ENCODE measurements at regions of chr18 and their contacts with region 1.

Region 1: DNA sequence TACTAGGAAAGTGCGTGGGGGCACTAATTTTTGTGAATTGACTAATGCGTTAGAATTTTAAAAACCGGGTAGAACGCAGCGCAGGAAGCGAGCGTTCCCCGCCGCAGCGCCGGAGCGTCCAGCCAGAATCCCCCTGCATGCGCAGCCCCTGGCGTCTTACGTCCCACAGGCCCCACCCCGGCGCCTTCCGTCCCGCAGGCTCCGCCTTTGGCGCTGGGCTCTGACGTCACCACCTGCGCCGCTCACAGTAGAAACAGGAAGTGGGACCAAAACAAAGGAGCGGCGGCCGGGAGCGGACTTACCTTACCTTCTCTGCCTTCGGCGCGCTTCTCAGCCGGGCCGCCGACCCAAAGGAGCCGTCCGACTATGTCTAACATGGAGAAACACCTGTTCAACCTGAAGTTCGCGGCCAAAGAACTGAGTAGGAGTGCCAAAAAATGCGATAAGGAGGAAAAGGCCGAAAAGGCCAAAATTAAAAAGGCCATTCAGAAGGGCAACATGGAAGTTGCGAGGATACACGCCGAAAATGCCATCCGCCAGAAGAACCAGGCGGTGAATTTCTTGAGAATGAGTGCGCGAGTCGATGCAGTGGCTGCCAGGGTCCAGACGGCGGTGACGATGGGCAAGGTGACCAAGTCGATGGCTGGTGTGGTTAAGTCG is at the start of gene CHMP1B:
- DNase-seq: peak; percentile 98
- H3K4me3 ChIP-seq: peak within 1 kb of the TSS; percentile 42 to 94 (median 86)
- H3K27ac ChIP-seq: peak within 1 kb of the TSS; percentile 89
- H3K4me1 ChIP-seq: peaks cover 21% of the 10 kb centered on the region
- H3K27me3 ChIP-seq: peaks cover 2 to 5% of the 10 kb centered on the region in 2 experiments
- CTCF ChIP-seq: no peak
- POLR2A ChIP-seq: peak; percentile 95
- total RNA-seq, gene CHMP1B: 27.0 and 27.2 TPM in 2 replicates

Region 2: DNA sequence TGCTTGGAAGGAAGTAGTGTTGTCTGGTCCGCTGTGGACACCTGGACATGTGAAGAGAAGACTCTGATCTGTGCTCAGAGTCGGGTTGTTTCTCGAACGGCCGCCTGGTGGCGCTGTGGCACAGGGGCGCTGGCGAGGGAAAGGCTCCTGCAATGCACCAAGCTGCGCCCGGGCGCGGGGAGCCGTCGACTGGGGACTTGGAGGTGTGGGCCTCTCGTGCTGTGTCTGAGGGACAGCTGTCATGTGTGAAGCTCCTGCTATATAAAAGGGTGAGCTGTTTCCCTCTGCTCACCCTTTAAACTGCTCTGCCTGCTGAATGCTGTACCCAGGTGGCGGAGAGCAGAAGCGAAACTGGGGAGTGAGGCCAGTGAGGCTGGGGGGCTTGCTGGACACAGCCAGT is 118.2 kb before region 1 on chr18:
- CTCF ChIA-PET with region 1: interaction called, 8 read pairs
- POLR2A ChIA-PET with region 1: no interaction called
- dilution Hi-C with region 1: no loop called
- intact Hi-C with region 1: loop called (anchors 10 kb)
- DNase-seq: peak; percentile 60
- H3K4me3 ChIP-seq: no peak overlapping the region
- H3K27ac ChIP-seq: no peak overlapping the region
- H3K4me1 ChIP-seq: no peaks in the 10 kb centered on the region
- H3K27me3 ChIP-seq: peaks cover 0 to 2% of the 10 kb centered on the region in 2 experiments
- CTCF ChIP-seq: peak; percentile 86 to 96
- POLR2A ChIP-seq: no peak

Region 3: DNA sequence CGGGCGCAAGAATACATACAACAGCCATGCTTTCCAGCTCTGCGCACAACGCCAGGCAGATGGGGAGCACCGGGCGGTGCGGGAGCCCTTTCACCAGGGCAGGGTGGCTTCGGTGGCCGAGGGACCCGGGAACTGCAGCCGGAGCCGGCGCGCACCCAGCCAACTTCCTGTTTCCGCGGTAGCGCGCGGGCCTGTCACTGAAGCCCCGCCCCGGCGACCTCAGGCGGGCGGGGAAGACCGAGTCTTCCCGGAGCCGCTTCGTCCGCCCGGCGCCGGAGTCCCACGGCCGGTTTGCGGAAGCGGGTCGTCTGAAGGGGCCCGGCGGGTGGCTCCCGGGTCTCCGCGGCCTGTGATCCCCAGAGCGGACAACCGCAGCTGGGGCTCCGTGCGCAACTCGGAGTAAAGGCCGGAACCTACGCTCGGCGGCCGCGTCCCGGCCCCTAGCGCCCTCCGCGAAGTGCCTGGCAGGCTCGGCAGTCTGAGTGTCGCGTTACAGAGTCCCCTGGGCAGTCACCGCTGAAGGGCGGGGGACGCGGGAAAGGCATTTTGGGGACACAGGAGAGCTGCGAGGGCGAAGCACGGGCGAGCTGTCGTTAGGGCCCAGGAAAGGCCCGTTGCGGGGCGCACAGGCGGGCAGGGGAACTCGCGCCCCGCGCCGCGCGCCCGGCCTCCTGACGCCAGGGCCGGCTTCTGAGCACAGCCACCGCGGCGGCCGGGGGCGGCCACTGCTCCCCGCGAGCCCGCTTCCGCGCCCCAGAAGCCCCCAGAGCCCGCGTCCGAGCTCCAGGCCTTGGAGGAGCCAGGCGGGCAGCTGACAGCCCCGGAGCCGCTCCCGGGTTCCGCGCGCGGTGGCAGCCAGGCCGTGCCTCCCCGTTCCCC is 57.1 kb after region 1 on chr18 and contains the start of gene MPPE1:
- CTCF ChIA-PET with region 1: no interaction called
- POLR2A ChIA-PET with region 1: no interaction called
- dilution Hi-C with region 1: no loop called
- intact Hi-C with region 1: loop called (anchors 1 kb)
- DNase-seq: peak; percentile 77
- H3K4me3 ChIP-seq: peak within 1 kb of the TSS; percentile 76 to 97 (median 93)
- H3K27ac ChIP-seq: peak within 1 kb of the TSS; percentile 93
- H3K4me1 ChIP-seq: peaks cover 9% of the 10 kb centered on the region
- H3K27me3 ChIP-seq: no peaks in the 10 kb centered on the region
- CTCF ChIP-seq: no peak
- POLR2A ChIP-seq: no peak
- total RNA-seq, gene MPPE1: 28.8 and 30.6 TPM in 2 replicates

Region 4: GRCh38 chr18:11947214-11948191 is 96.2 kb after region 1 on chr18:
- CTCF ChIA-PET with region 1: no interaction called
- POLR2A ChIA-PET with region 1: no interaction called
- dilution Hi-C with region 1: no loop called
- intact Hi-C with region 1: loop called (anchors 1 kb)
- DNase-seq: peak; percentile 97
- H3K4me3 ChIP-seq: peak overlapping the region; percentile 43 to 60 (median 57)
- H3K27ac ChIP-seq: peak overlapping the region; percentile 95
- H3K4me1 ChIP-seq: peaks cover 11% of the 10 kb centered on the region
- H3K27me3 ChIP-seq: no peaks in the 10 kb centered on the region
- CTCF ChIP-seq: no peak
- POLR2A ChIP-seq: peak; percentile 27

Region 5: GRCh38 chr18:11963991-11964484 is 112.8 kb after region 1 on chr18:
- CTCF ChIA-PET with region 1: no interaction called
- POLR2A ChIA-PET with region 1: no interaction called
- dilution Hi-C with region 1: no loop called
- intact Hi-C with region 1: no loop called
- DNase-seq: no peak
- H3K4me3 ChIP-seq: no peak overlapping the region
- H3K27ac ChIP-seq: no peak overlapping the region
- H3K4me1 ChIP-seq: no peaks in the 10 kb centered on the region
- H3K27me3 ChIP-seq: no peaks in the 10 kb centered on the region
- CTCF ChIP-seq: no peak
- POLR2A ChIP-seq: no peak

Region 6: DNA sequence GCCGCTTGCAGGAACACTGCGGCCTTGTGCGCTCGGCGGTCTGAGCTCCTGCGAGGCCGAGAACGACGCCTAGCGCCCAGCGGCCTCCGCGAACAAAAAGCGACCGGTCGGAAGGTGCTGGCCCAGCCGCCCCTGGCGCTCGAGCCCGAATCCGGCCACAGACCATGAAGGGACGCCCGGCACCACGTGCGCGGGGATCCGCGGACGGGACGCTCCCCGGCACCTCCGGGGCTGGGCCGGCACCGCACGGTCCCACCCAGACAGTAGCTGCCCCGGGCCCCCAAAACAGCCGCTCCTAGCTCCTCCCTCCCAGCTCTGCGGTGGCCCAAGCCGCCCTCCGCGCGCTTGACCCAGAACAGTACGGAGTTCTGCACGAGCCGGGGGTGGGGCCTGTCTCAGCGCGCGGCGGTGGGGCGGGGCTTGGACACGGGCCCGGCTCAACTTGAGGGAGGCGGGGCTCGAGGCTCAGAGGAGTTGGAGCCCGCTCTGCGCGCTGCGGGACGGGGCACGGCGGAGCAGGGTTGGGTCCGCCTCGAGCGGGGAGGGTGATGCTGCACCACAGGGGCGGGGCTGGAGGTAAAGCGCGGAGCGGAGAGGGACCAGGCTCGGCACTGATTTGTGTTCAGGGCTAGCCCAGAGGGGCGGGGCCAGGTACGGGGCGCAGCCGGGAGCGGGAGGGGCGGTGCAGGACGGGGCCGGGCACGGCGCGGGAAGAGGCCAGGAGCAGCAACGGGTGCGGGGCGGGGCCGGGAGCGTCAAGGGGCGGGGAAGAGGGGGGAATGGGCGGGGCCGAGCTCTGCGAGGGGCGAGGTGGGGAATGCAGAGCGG is 129.5 kb after region 1 on chr18:
- CTCF ChIA-PET with region 1: no interaction called
- POLR2A ChIA-PET with region 1: no interaction called
- dilution Hi-C with region 1: no loop called
- intact Hi-C with region 1: loop called (anchors 1 kb)
- DNase-seq: peak; percentile 98
- H3K4me3 ChIP-seq: peak overlapping the region; percentile 43 to 86 (median 72)
- H3K27ac ChIP-seq: peak overlapping the region; percentile 71
- H3K4me1 ChIP-seq: peaks cover 12% of the 10 kb centered on the region
- H3K27me3 ChIP-seq: peaks cover 3 to 4% of the 10 kb centered on the region in 2 experiments
- CTCF ChIP-seq: peak in 1 of 2 donors; percentile 19
- POLR2A ChIP-seq: peak; percentile 61

Region 7: DNA sequence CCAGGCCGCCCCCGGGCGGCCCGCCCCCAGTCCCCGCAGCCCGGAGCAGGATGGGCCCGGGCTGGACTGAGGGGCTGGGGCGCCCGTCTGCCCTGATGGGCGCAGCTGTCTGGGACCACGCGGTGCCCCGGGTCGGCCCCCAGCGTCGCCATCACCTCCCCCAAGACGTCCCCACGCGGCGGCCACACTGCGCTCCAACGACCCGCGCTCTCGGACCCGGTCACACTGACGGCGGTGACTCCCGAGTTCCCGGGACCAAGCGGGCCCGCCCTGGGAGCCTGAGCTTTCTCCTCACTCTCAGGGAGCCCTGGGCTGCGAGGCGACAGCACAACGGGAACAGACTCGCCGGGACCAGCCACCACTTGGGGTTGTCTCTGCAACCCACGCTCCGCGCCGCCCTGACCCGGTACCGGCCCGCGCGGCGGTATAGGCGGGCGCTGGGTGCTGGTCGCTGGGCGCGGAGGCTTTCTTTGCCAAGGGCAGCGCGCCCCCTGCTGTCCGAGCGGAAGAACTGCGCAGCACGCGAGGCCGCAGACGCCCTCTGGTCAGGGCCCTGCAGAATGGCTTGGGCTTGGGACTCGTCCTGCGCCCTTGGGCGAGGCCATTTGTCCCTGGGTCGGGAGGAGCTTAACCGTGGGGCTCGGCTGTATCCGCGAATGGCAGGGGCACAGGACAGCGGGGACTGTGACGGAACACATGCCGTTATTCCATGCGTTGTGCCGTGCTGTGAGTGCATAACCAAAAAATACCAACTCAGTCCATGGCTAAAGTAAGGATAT is 187.6 kb after region 1 on chr18:
- CTCF ChIA-PET with region 1: no interaction called
- POLR2A ChIA-PET with region 1: no interaction called
- dilution Hi-C with region 1: no loop called
- intact Hi-C with region 1: loop called (anchors 5 kb)
- DNase-seq: peak; percentile 70
- H3K4me3 ChIP-seq: peak overlapping the region in 2 of 3 experiments; percentile 52 to 57
- H3K27ac ChIP-seq: no peak overlapping the region
- H3K4me1 ChIP-seq: peaks cover 2% of the 10 kb centered on the region
- H3K27me3 ChIP-seq: peaks cover 5 to 7% of the 10 kb centered on the region in 2 experiments
- CTCF ChIP-seq: peak; percentile 97 to 99
- POLR2A ChIP-seq: no peak

Region 8: GRCh38 chr18:12113999-12114646 is 262.8 kb after region 1 on chr18:
- CTCF ChIA-PET with region 1: no interaction called
- POLR2A ChIA-PET with region 1: no interaction called
- dilution Hi-C with region 1: no loop called
- intact Hi-C with region 1: no loop called
- DNase-seq: no peak
- H3K4me3 ChIP-seq: no peak overlapping the region
- H3K27ac ChIP-seq: no peak overlapping the region
- H3K4me1 ChIP-seq: no peaks in the 10 kb centered on the region
- H3K27me3 ChIP-seq: peaks cover 3 to 15% of the 10 kb centered on the region in 2 experiments
- CTCF ChIP-seq: no peak
- POLR2A ChIP-seq: no peak